ENCODE measurements at regions of chrX and their contacts with region 1.

Region 1: GRCh38 chrX:123833387-123833786 is 26.5 kb upstream of the XIAP start:
- DNase-seq: peak; percentile 72
- ATAC-seq: peak; percentile 62
- H3K4me3 Mint-ChIP-seq: no peak overlapping the region
- H3K27ac Mint-ChIP-seq: no peak overlapping the region
- H3K4me1 Mint-ChIP-seq: peaks cover 9% of the 10 kb centered on the region
- H3K27me3 Mint-ChIP-seq: peaks cover 6% of the 10 kb centered on the region

Region 2: DNA sequence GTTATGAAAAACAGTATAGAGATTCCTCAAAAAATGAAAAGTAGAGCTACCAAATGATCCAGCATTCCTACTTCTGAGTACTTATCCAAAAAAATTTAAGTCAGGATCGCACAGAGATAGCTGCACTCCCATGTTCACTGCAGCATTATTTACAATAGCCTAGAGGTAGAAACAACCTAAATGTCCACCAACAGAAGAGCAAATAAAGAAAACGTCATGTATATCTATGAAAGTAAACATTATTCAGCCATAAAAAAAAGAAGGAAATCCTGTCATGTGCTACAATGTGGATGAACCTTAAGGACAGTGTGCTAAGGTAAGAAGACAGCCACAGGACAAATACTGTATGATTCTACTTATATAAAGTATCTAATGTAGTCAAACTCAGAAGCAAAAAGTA is 112.9 kb before region 1 on chrX:
- CTCF ChIA-PET with region 1: no interaction called
- POLR2A ChIA-PET with region 1: no interaction called
- intact Hi-C with region 1: no loop called
- DNase-seq: no peak
- ATAC-seq: no peak
- H3K4me3 Mint-ChIP-seq: no peak overlapping the region
- H3K27ac Mint-ChIP-seq: no peak overlapping the region
- H3K4me1 Mint-ChIP-seq: peaks cover 25% of the 10 kb centered on the region
- H3K27me3 Mint-ChIP-seq: no peaks in the 10 kb centered on the region

Region 3: DNA sequence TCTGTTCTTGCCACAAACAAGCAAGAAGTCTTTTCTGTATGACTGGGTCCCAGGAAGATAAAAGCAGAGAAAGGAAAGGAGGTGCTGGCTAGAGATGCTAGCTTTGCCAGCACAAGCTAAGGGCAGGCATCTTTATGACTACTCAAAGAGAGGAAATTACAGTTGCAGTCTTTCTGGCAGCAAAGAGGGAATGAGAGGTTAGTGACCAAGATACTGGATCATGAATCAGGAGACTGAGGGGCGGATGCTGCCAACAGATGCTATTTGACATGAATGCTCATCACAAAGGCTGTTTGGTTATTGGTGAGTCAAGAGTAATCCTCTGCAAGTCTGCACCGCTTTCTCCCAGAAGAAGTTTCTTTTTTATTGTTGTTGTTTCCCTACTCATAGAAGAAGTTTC is 20.9 kb after region 1 on chrX:
- CTCF ChIA-PET with region 1: interaction called, 5 read pairs
- POLR2A ChIA-PET with region 1: interaction called, 4 read pairs
- intact Hi-C with region 1: loop called in 1 of 2 experiments (anchors 1 kb)
- DNase-seq: peak; percentile 38
- ATAC-seq: peak; percentile 84
- H3K4me3 Mint-ChIP-seq: no peak overlapping the region
- H3K27ac Mint-ChIP-seq: no peak overlapping the region
- H3K4me1 Mint-ChIP-seq: peaks cover 13% of the 10 kb centered on the region
- H3K27me3 Mint-ChIP-seq: no peaks in the 10 kb centered on the region

Region 4: DNA sequence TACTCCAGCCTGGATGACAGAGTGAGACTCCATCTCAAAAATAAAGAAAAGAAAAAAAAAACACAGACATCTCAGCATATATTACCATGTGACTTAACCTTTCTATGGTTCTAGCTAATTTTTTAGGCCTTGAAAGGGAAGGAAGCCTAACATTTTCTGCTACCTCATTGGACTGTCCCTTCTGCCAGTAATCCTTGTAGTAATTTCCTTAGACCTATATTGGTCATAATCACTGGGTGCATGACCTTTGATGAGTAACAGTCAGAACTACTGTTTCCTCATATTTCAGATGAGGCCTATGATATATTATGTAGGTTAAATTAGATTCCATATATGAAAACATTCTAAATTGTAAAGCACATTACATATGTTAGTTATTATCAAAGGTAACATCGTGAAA is 36.1 kb after region 1 on chrX:
- CTCF ChIA-PET with region 1: interaction called, 12 read pairs
- POLR2A ChIA-PET with region 1: interaction called, 3 read pairs
- intact Hi-C with region 1: no loop called
- DNase-seq: no peak
- ATAC-seq: peak; percentile 98
- H3K4me3 Mint-ChIP-seq: no peak overlapping the region
- H3K27ac Mint-ChIP-seq: peak overlapping the region; percentile 37
- H3K4me1 Mint-ChIP-seq: peaks cover 19% of the 10 kb centered on the region
- H3K27me3 Mint-ChIP-seq: no peaks in the 10 kb centered on the region

Region 5: DNA sequence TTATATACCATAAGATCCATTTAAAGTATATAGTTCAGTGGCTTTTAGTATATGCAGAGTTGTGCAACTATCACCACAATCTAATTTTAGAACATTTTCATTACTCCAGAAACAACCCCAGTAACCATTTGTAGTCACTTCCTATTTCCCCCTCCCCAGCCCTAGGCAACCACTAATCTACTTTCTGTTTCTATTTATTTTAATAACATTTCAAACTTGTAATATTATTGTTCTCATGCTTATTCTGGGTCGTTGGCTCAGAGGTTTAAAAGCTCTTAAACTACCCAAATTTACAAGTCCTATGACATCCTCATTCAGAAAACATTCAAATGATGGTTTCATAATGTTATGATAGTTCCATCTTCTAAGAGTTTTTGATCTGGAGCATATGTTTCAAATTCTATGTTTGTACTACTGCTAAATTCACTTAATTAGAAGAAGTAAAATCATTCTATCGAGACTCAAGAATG is 44.9 kb after region 1 on chrX:
- CTCF ChIA-PET with region 1: interaction called, 4 read pairs
- POLR2A ChIA-PET with region 1: interaction called, 3 read pairs
- intact Hi-C with region 1: loop called (anchors 1 to 2 kb)
- DNase-seq: no peak
- ATAC-seq: peak; percentile 17
- H3K4me3 Mint-ChIP-seq: peak overlapping the region; percentile 8
- H3K27ac Mint-ChIP-seq: no peak overlapping the region
- H3K4me1 Mint-ChIP-seq: peaks cover 28% of the 10 kb centered on the region
- H3K27me3 Mint-ChIP-seq: no peaks in the 10 kb centered on the region